ENCODE measurements at regions of chr3 and their contacts with region 1.

Region 1: GRCh38 chr3:172039436-172040077 is at the start of gene FNDC3B:
- DNase-seq: peak; percentile 97
- ATAC-seq: peak; percentile 92
- H3K4me3 Mint-ChIP-seq: peak within 1 kb of the TSS; percentile 86
- H3K27ac Mint-ChIP-seq: peak within 1 kb of the TSS; percentile 93
- H3K4me1 Mint-ChIP-seq: peaks cover 29% of the 10 kb centered on the region
- H3K27me3 Mint-ChIP-seq: no peaks in the 10 kb centered on the region
- CTCF ChIP-seq: no peak
- total RNA-seq, gene FNDC3B: 10.6 to 12.0 TPM

Region 2: DNA sequence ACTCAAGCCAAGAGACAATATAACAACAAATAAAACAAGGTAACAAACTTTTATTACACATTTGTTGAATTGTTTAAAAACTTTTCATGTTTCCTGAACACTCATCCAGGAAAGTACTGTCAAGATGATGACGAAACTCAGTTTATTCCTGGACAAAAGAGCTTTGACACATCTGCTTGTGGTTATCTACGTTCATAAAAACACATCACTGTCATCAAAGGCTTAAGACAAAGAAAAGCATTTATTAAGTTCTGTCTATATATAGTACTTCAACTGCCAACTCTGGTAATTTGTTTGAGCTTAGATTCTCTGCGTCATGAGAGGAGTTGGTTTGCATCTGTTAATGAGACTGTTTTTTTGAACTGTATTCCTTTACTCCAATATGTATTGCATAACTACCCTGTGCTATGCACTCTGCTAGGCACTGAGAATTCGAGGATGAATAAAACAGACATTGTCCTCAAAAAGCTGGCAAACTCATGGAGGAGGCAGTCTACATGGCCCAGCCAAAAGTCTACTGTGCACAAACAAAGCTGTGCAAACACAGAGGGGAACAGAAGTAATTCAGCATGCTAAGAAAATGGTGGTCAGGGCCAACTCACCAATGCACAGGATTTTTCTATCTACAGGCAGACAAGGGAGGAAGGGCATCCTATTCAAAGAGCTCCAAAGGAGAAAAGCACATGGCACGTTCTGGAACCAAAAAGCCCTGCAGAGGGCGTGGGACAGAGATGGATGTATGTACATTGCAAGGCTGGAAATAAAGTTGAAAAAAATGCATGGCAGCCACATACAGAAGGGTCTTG is 250.8 kb before region 1 on chr3:
- CTCF ChIA-PET with region 1: no interaction called
- POLR2A ChIA-PET with region 1: no interaction called
- intact Hi-C with region 1: no loop called
- DNase-seq: no peak
- ATAC-seq: no peak
- H3K4me3 Mint-ChIP-seq: no peak overlapping the region
- H3K27ac Mint-ChIP-seq: no peak overlapping the region
- H3K4me1 Mint-ChIP-seq: no peaks in the 10 kb centered on the region
- H3K27me3 Mint-ChIP-seq: no peaks in the 10 kb centered on the region
- CTCF ChIP-seq: no peak

Region 3: DNA sequence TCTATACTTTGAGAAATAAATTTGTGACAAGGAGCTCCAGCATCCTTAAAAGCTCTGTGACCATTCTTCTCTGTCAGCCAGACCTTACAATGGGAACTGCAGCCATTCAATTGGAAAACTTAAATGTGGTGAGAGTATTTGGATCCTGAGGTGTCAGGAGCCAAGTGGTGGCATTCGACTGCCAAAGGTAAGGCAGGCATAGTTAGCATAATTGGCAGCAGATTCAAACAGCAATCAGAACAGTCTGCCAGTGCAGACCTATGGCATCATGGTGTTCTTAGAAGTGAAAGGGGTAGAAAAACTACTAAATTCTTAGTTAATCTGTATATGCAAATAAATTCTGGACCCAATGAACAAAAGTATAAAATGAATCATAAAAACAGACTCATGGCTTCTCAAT is 18.4 kb before region 1 on chr3:
- CTCF ChIA-PET with region 1: interaction called, 15 read pairs
- POLR2A ChIA-PET with region 1: no interaction called
- intact Hi-C with region 1: no loop called
- DNase-seq: no peak
- ATAC-seq: no peak
- H3K4me3 Mint-ChIP-seq: no peak overlapping the region
- H3K27ac Mint-ChIP-seq: no peak overlapping the region
- H3K4me1 Mint-ChIP-seq: no peaks in the 10 kb centered on the region
- H3K27me3 Mint-ChIP-seq: peaks cover 3% of the 10 kb centered on the region
- CTCF ChIP-seq: no peak

Region 4: GRCh38 chr3:172106989-172107388 is 67.4 kb after region 1 on chr3:
- CTCF ChIA-PET with region 1: interaction called, 9 read pairs
- POLR2A ChIA-PET with region 1: interaction called, 4 read pairs
- intact Hi-C with region 1: loop called (anchors 5 kb)
- DNase-seq: peak; percentile 87
- ATAC-seq: peak; percentile 55
- H3K4me3 Mint-ChIP-seq: peak overlapping the region; percentile 69
- H3K27ac Mint-ChIP-seq: peak overlapping the region; percentile 85
- H3K4me1 Mint-ChIP-seq: peaks cover 72% of the 10 kb centered on the region
- H3K27me3 Mint-ChIP-seq: peaks cover 3% of the 10 kb centered on the region
- CTCF ChIP-seq: no peak

Region 5: DNA sequence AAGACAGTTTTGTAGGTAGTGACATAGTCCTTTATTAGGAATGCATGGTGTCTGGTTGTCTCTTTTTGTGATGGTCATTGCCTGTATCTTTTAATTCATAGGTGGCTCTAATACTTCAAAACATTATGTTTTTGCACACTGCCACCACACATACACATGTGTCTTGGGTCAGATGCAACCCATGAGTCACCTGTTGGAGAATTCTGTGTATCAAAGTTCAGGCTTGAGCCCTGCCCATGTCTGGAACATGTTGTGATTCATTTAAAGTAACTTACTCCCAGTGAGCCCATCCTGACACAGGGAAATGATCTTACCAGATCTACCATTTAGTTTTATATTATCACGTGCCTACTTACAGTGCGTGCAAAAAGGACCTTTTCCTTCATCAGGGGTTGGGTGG is 266.0 kb after region 1 on chr3:
- CTCF ChIA-PET with region 1: no interaction called
- POLR2A ChIA-PET with region 1: no interaction called
- intact Hi-C with region 1: loop called (anchors 10 kb)
- DNase-seq: no peak
- ATAC-seq: no peak
- H3K4me3 Mint-ChIP-seq: no peak overlapping the region
- H3K27ac Mint-ChIP-seq: no peak overlapping the region
- H3K4me1 Mint-ChIP-seq: no peaks in the 10 kb centered on the region
- H3K27me3 Mint-ChIP-seq: no peaks in the 10 kb centered on the region
- CTCF ChIP-seq: no peak

Measured in activated CD8-positive, alpha-beta T cell treated with anti-CD3 and anti-CD28 coated beads for 36 hours (primary cell).